Activated CD8-positive, alpha-beta T cell treated with anti-CD3 and anti-CD28 coated beads, Interleukin-2, amount 10 ng/mL, durations not matched to agents 7 days and 5 days (primary cell): ENCODE measurements at regions of chr14 and their contacts with region 1.

Region 1: GRCh38 chr14:56590535-56590960 is 10.9 kb downstream of the TMEM260 start:
- DNase-seq: no peak
- ATAC-seq: no peak
- H3K4me3 Mint-ChIP-seq: no peak overlapping the region
- H3K27ac Mint-ChIP-seq: no peak overlapping the region
- H3K4me1 Mint-ChIP-seq: no peaks in the 10 kb centered on the region
- H3K27me3 Mint-ChIP-seq: no peaks in the 10 kb centered on the region

Region 2: GRCh38 chr14:56579345-56580220 is 11.0 kb before region 1 on chr14 and contains the start of gene TMEM260:
- CTCF ChIA-PET with region 1: interaction called, 27 read pairs
- POLR2A ChIA-PET with region 1: interaction called, 5 read pairs
- DNase-seq: peak; percentile 92
- ATAC-seq: peak; percentile 93
- H3K4me3 Mint-ChIP-seq: peak within 1 kb of the TSS; percentile 91
- H3K27ac Mint-ChIP-seq: peak within 1 kb of the TSS; percentile 98
- H3K4me1 Mint-ChIP-seq: peaks cover 23% of the 10 kb centered on the region
- H3K27me3 Mint-ChIP-seq: no peaks in the 10 kb centered on the region
- total RNA-seq, gene TMEM260: 13.9 to 15.8 TPM

Region 3: DNA sequence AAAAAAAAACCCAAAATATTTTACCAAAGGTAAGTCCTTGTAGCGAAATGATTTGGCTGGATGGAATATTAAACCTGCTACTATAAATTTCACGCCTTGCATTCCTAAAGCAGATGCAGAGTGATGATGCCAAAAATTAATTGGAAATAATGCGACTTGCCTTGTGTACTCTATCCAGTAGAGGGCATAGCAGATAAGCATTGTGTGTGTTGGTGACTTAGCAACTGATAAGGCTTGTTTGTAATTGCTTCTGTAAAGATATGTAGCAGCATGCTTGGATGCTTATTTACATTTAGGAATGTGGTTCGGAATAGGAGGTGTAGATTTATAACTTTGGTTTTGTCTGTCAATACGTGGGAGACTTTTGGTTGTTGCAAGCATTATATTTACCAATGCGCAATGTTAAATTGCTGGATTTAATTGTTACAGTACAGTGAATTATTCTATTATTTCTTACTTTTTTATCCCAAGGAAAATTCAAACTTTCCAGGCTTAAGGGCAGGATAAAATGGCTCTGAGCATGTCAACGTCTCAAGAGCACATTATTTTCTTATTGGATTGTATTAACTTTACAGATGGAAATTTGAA is 69.5 kb after region 1 on chr14:
- CTCF ChIA-PET with region 1: no interaction called
- POLR2A ChIA-PET with region 1: no interaction called
- DNase-seq: no peak
- ATAC-seq: no peak
- H3K4me3 Mint-ChIP-seq: no peak overlapping the region
- H3K27ac Mint-ChIP-seq: no peak overlapping the region
- H3K4me1 Mint-ChIP-seq: no peaks in the 10 kb centered on the region
- H3K27me3 Mint-ChIP-seq: no peaks in the 10 kb centered on the region